Sigmoid colon (tissue), 7 donors: ENCODE measurements at regions of chr6 and their contacts with region 1.

Region 1: GRCh38 chr6:75368151-75368779 is 83.7 kb upstream of the TMEM30A start:
- DNase-seq: peak; percentile 62
- H3K4me3 ChIP-seq: no peak overlapping the region
- H3K27ac ChIP-seq: peak overlapping the region; percentile 10 to 70 (median 64)
- H3K4me1 ChIP-seq: peaks cover 0 to 35% (median 29%) of the 10 kb centered on the region in 4 donors
- H3K27me3 ChIP-seq: no peaks in the 10 kb centered on the region
- CTCF ChIP-seq: peak in 3 of 4 experiments; percentile 33 to 60 (median 48)
- EP300 ChIP-seq: no peak
- POLR2A ChIP-seq: no peak

Region 2: GRCh38 chr6:75296811-75297779 is 71.2 kb before region 1 on chr6:
- intact Hi-C with region 1: loop called (anchors 5 kb)
- DNase-seq: no peak
- H3K4me3 ChIP-seq: no peak overlapping the region
- H3K27ac ChIP-seq: peak overlapping the region in 1 of 4 donors; percentile 24
- H3K4me1 ChIP-seq: peaks cover 0 to 34% (median 26%) of the 10 kb centered on the region in 4 donors
- H3K27me3 ChIP-seq: no peaks in the 10 kb centered on the region
- CTCF ChIP-seq: peak; percentile 20 to 67 (median 62)
- EP300 ChIP-seq: no peak
- POLR2A ChIP-seq: no peak

Region 3: DNA sequence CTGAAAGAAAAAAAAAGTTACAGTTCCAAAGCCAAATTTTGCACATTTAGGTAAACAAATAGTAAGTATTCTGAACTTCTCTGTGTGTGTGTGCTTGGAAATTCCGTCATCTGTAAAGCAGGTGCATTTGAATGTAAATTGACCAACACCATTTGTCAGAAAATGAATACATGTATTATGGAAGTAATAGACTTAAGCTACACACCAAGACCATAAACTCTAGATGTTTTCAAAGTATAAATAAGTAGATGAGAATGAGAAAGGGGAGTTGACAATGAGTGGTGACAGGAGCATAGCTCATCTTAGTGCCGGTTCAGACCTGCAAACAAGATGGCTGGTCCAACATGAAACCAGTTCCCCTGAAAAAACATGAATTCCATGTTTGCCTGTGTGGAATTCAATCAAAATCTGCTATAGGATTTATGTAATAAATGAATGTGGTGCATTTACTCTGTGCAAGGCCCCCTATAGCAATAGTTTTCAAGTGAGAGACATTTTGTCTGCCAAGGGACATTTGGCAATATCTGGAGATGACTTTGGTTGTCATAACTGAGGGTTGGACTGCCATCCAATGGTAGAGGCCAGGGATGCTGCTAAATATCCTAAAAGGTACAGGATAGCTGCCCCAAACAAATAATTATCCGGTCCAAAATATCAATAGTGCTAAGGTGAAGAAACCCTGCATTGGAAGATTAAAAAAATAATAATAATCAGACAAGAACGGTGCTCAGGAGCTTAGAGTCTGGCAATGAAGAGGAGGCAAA is 136.4 kb after region 1 on chr6:
- intact Hi-C with region 1: loop called (anchors 5 kb)
- DNase-seq: no peak
- H3K4me3 ChIP-seq: no peak overlapping the region
- H3K27ac ChIP-seq: no peak overlapping the region
- H3K4me1 ChIP-seq: peaks cover 0 to 2% (median 0%) of the 10 kb centered on the region in 4 donors
- H3K27me3 ChIP-seq: no peaks in the 10 kb centered on the region
- CTCF ChIP-seq: peak in 2 of 4 experiments; percentile 20 to 27
- EP300 ChIP-seq: no peak
- POLR2A ChIP-seq: no peak

Region 4: GRCh38 chr6:75516757-75517156 is 148.5 kb after region 1 on chr6:
- intact Hi-C with region 1: no loop called
- DNase-seq: no peak
- H3K4me3 ChIP-seq: no peak overlapping the region
- H3K27ac ChIP-seq: no peak overlapping the region
- H3K4me1 ChIP-seq: peaks cover 0 to 7% (median 0%) of the 10 kb centered on the region in 4 donors
- H3K27me3 ChIP-seq: no peaks in the 10 kb centered on the region
- CTCF ChIP-seq: no peak
- EP300 ChIP-seq: no peak
- POLR2A ChIP-seq: no peak